PC-3 (cell line): ENCODE measurements at regions of chr15 and their contacts with region 1.

Region 1: GRCh38 chr15:69576035-69576526 is 123.5 kb downstream of the RPLP1 start:
- DNase-seq: peak; percentile 75
- ATAC-seq: peak; percentile 57
- H3K4me3 ChIP-seq: no peak overlapping the region
- H3K27ac ChIP-seq: peak overlapping the region; percentile 35; the same call in 1 of the 2 replicates
- H3K4me1 ChIP-seq: peaks cover 47% of the 10 kb centered on the region
- H3K27me3 ChIP-seq: no peaks in the 10 kb centered on the region
- CTCF ChIP-seq: peak; percentile 88

Region 2: DNA sequence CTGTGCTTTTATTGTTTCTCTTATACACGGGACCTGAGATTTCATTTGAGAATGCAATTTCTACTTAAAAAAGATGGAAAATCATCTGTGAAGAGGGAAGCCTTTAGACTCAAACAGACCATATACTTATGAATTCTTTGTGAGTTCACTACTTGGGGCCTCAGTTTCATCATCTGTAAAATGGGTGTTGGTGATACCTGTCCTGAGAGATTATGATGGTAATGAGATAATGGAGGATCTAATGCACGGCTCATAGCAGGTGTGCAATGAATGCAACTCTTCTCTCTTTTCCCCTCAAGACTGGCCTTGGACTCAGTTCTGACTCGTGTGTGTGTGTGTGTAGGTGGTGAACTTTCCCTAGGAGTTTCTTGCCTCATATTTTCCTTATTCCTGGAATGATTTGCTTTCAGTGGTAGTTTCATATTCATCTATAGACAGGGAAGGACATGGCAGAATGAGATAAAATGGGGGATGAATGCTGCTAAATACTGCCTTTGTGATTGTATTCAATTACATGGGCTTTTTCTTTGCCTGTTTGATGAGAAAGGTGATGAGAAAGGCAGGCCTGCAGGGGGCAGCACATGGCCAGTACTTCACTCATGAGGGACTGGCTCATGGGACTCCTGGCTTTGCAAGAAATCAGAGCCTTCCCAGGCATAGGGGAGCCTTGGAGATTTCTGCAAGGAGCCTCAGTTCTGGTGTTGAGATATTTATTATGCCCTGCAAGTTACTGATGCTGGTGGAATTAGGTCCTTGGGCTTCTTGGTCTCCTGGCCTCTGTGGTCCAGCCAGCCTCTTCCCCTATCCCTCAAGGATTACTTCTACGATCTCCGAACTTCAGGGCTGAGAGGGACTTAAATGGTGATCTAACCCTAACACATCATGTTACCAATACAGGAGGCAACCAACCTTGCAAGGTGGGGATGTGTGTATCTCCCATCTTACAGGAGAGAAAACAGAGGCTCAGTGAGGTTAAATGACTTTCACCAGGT is 52.8 kb before region 1 on chr15:
- CTCF ChIA-PET with region 1: interaction called, 4 read pairs
- POLR2A ChIA-PET with region 1: no interaction called
- intact Hi-C with region 1: loop called (anchors 5 kb)
- DNase-seq: peak; percentile 70
- ATAC-seq: peak; percentile 60
- H3K4me3 ChIP-seq: no peak overlapping the region
- H3K27ac ChIP-seq: no peak overlapping the region
- H3K4me1 ChIP-seq: no peaks in the 10 kb centered on the region
- H3K27me3 ChIP-seq: no peaks in the 10 kb centered on the region
- CTCF ChIP-seq: peak; percentile 87

Region 3: GRCh38 chr15:69557340-69558137 is 18.5 kb before region 1 on chr15:
- CTCF ChIA-PET with region 1: no interaction called
- POLR2A ChIA-PET with region 1: no interaction called
- intact Hi-C with region 1: loop called (anchors 2 kb)
- DNase-seq: peak; percentile 97
- ATAC-seq: peak; percentile 84
- H3K4me3 ChIP-seq: no peak overlapping the region
- H3K27ac ChIP-seq: peak overlapping the region; percentile 81
- H3K4me1 ChIP-seq: peaks cover 40% of the 10 kb centered on the region
- H3K27me3 ChIP-seq: no peaks in the 10 kb centered on the region
- CTCF ChIP-seq: no peak